ENCODE measurements at regions of chr4 and their contacts with region 1.

Region 1: DNA sequence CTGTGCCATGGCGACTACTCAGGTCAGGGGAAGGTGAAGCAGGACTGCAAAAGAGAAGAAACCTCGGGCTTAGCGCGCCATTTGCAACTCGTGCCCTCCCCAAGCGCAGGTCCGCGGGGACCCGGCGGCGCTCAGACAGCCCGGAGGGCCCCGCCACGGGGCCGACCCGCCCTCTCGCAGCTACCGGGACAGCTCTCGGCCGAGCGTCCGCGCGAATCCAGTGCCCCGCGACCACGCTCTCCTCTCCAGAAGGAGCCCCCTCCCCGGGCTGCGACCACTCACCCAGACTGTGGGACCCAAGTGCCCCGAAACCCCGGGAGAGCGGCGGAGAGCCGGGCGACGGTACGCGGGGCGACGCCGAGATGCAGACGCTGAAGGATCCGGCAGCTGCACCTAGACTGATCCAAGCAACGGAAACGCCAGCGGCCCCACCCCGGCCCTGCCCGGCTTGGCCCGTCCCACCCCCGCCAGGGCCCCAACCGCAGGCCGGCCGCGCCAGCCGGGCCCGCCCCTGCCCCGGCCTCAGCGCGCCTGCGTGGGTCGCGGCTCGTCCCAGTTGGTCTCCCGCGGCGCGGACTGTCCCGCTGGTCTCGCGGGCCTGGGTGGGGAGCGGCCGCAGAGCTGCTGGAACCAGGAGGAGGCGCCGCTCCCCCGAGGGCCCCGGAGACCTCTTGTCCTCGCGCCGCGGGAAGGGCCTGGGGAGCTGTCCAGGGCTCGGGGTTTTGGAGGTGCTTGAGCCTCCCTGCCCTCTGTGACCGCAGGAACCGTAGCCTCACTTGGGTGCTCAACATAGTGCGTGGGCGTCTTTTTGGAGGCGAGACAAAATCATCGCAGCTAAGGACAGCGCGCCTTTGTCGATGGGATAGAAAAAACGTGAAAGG is at the start of gene ANXA5:
- DNase-seq: peak in 1 of 2 experiments; percentile 84
- H3K4me3 ChIP-seq: peak within 1 kb of the TSS; percentile 66 to 98 (median 90)
- H3K27ac ChIP-seq: peak within 1 kb of the TSS; percentile 75
- H3K4me1 ChIP-seq: peaks cover 0 to 10% (median 6%) of the 10 kb centered on the region in 4 experiments; a peak in 6 of 7 replicates
- H3K27me3 ChIP-seq: no peaks in the 10 kb centered on the region; a peak in 1 of 7 replicates
- CTCF ChIP-seq: peak; percentile 28 to 52 (median 36)
- EP300 ChIP-seq: no peak
- POLR2A ChIP-seq: peak; percentile 37 to 68
- RAD21 ChIP-seq: peak; percentile 50 to 68
- total RNA-seq, gene ANXA5: 213 and 221 TPM in 2 replicates

Region 2: GRCh38 chr4:121711263-121712000 is 14.6 kb after region 1 on chr4:
- CTCF ChIA-PET with region 1: interaction called, 4 read pairs
- POLR2A ChIA-PET with region 1: interaction called, 15 read pairs
- DNase-seq: peak; percentile 84 to 85
- H3K4me3 ChIP-seq: peak overlapping the region in 3 of 4 experiments; percentile 12 to 48 (median 26); a peak in 5 of 8 replicates
- H3K27ac ChIP-seq: peak overlapping the region; percentile 44; the same call in 1 of the 2 replicates
- H3K4me1 ChIP-seq: peaks cover 5 to 10% (median 7%) of the 10 kb centered on the region in 4 experiments; a peak in 5 of 7 replicates
- H3K27me3 ChIP-seq: no peaks in the 10 kb centered on the region
- CTCF ChIP-seq: 0 out of 4 replicates have a peak, but pooled peaks of 1 of the 3 experiments have one; percentile 1
- EP300 ChIP-seq: peak in 1 of 2 experiments; percentile 79; a peak in 1 of 3 replicates
- POLR2A ChIP-seq: 0 out of 3 replicates have a peak, but pooled peaks of 1 of the 2 experiments have one; percentile 36
- RAD21 ChIP-seq: peak; percentile 13 to 14; a peak in 3 of 4 replicates

Region 3: DNA sequence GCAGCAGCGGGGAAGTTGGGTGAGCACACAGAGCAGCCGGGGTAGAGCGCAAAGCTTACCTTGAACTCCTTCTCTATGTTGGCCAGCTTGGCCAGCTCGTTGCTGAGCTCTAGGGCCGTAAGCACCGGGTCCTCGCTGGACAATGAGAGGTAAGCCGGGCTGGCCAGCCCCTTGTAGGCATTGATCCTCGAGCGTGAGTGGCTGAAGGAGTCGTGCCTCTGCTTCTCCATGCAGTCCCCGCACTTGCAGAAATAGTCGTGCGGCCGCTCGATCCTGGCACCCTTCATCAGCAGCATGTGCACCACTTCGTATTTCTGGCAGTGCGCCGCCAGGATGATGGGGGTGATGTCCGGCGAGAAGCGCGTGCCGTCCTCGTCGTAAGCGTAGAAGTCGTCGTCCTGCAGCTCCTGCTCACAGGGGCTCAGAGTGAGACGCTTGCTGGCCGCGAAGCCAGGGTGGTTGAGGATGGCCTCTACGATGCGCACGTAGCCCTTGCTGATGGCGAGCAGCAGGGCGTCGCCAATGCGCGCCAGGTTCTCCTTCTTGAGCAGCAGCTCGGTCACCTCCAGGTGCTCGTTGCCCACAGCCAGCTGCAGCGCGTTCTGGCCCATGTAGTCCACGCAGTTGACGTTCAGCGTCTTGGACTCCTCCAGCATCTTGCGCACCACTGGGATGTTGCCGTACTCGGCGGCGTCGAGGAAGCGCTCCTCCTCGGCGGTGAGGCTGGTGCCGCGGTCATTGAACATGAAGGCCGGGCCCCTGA is 235.6 kb after region 1 on chr4:
- CTCF ChIA-PET with region 1: no interaction called
- POLR2A ChIA-PET with region 1: no interaction called
- DNase-seq: no peak
- H3K4me3 ChIP-seq: no peak overlapping the region
- H3K27ac ChIP-seq: no peak overlapping the region
- H3K4me1 ChIP-seq: no peaks in the 10 kb centered on the region
- H3K27me3 ChIP-seq: no peaks in the 10 kb centered on the region
- CTCF ChIP-seq: no peak
- EP300 ChIP-seq: no peak
- POLR2A ChIP-seq: no peak
- RAD21 ChIP-seq: no peak